ENCODE measurements at regions of chr11 and their contacts with region 1.

Region 1: DNA sequence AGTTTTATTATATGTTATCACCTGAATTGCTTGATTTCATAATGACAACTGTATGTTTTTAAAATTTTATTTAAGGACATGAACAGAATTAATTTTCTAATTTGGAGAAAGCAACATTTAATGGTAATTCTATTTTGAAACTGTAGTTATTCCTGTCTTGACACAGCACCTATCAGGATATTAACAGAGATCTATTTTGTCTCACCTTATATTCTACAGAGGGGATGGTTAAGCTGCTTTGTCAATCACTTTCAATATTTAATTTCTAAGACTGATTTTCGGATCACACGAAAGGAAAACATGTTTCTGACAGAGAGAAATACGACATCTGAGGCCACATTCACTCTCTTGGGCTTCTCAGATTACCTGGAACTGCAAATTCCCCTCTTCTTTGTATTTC is at the start of gene OR5D16:
- DNase-seq: no peak
- ATAC-seq: no peak
- H3K4me3 ChIP-seq: no peak within 1 kb of the TSS
- H3K27ac ChIP-seq: no peak within 1 kb of the TSS
- H3K4me1 ChIP-seq: no peaks in the 10 kb centered on the region
- H3K27me3 ChIP-seq: no peaks in the 10 kb centered on the region
- CTCF ChIP-seq: no peak
- total RNA-seq, gene OR5D16: not detected

Region 2: GRCh38 chr11:55773138-55773537 is 65.3 kb before region 1 on chr11 and contains the start of gene OR5D13:
- CTCF ChIA-PET with region 1: no interaction called
- POLR2A ChIA-PET with region 1: no interaction called
- in situ Hi-C with region 1: no loop called
- intact Hi-C with region 1: loop called (anchors 10 kb)
- DNase-seq: no peak
- ATAC-seq: no peak
- H3K4me3 ChIP-seq: no peak within 1 kb of the TSS
- H3K27ac ChIP-seq: no peak within 1 kb of the TSS
- H3K4me1 ChIP-seq: no peaks in the 10 kb centered on the region
- H3K27me3 ChIP-seq: no peaks in the 10 kb centered on the region
- CTCF ChIP-seq: no peak
- total RNA-seq, gene OR5D13: not detected

Region 3: DNA sequence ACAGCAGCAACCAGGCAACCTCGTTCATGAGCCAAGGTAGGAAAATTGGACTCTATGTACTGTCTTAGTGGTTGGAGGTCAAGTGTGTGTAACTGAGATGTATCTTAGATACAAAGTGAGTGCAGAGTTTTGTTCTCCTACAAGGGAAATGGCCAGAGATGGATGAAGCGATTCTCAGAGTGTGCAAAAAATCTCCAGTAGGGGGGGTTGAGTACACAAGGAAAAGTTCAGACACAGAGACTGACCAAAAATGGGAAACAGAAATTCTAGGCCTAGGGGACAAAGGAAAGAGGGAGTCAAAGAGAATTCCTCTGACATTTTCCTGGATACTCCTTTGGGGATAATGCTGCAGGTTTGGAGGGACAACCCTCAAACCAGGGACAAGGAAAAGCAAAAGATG is 1112.1 kb after region 1 on chr11:
- CTCF ChIA-PET with region 1: no interaction called
- POLR2A ChIA-PET with region 1: no interaction called
- in situ Hi-C with region 1: no loop called
- intact Hi-C with region 1: loop called (anchors 10 kb)
- DNase-seq: no peak
- ATAC-seq: no peak
- H3K4me3 ChIP-seq: no peak overlapping the region
- H3K27ac ChIP-seq: no peak overlapping the region
- H3K4me1 ChIP-seq: no peaks in the 10 kb centered on the region
- H3K27me3 ChIP-seq: no peaks in the 10 kb centered on the region
- CTCF ChIP-seq: no peak